ENCODE measurements at regions of chr7 and their contacts with region 1.

Region 1: DNA sequence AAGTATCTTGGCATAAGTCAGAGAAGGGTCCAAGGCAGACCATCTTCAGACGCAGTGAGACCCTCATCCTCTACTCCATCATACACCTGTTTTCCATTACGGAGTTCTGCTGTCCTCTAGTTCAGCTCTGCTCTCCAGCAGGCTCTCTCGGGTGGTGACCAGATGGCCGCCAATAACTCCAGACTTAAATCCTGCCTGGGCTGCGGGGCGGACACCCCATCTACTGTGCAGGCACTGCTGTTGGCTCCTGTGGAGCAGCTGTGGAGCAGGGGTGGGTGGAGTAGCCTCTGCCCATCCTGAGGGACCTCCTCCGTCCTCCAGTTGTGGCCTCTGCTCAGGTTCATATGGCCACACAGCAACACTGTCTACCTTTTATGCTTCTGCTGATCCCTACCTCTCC is 608.1 kb downstream of the SDK1 start:
- DNase-seq: no peak

Region 2: DNA sequence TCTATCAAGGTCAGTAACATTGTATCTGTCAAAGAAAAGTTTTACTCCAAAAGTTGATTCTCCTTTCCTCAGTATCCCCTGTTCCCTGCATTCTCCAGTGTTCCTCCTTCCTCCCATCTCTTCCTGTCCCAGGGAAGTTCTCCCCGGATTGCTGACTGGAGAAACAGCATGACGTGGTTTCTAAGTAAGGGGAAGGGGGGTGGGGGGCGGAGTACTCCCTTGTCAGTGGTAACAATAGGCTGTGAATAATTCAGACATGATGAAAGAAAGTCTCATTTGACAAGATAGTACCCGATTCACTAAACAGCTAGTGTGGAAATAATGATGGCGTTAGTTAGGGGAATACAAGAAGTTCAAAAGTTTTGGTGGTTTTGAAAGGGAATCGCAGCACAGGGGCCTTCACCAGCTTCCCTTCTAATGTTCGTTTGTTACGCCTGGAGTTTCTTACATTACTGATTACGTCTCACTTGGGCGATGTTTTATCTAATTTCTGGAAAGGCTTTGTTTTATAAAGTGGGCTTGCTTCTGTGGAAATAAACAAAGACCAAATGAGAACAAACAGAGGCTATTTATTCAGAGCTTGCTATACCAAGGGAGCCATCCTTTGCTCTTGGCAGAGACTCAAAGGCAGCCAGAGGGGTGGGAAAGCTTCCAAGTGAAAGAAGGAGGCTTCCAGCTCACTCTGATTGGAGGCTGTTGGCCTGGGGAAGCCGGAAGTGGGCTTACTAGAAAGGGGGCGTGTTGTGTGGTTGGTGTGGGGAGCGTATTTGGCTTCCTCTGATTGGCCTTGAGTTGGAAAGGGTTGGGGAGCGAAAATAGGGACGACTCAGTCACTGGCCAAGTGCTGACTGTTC is 154.4 kb before region 1 on chr7:
- intact Hi-C with region 1: loop called (anchors 5 kb)
- DNase-seq: peak; percentile 33 to 91 (median 68)

Region 3: GRCh38 chr7:3955751-3956696 is 46.9 kb after region 1 on chr7:
- intact Hi-C with region 1: no loop called
- DNase-seq: peak in 2 of 10 donors; percentile 39 to 43